ENCODE measurements at regions of chr9 and their contacts with region 1.

Region 1: GRCh38 chr9:83027153-83027891 is 35.6 kb downstream of the RASEF start:
- DNase-seq: peak; percentile 83 to 88
- ATAC-seq: peak; percentile 98
- H3K4me3 ChIP-seq: 0 out of 3 replicates have a peak overlapping the region, but pooled peaks have one; percentile 5
- H3K27ac ChIP-seq: peak overlapping the region; percentile 86
- H3K4me1 ChIP-seq: peaks cover 42% of the 10 kb centered on the region
- CTCF ChIP-seq: no peak
- EP300 ChIP-seq: peak; percentile 72 to 75; a peak in 4 of 5 replicates
- POLR2A ChIP-seq: no peak
- RAD21 ChIP-seq: 0 out of 5 replicates have a peak, but pooled peaks of 1 of the 2 experiments have one; percentile 16

Region 2: GRCh38 chr9:83062656-83063527 is 35.6 kb after region 1 on chr9 and contains the start of gene RASEF:
- CTCF ChIA-PET with region 1: interaction called, 3 read pairs
- POLR2A ChIA-PET with region 1: interaction called, 10 read pairs
- DNase-seq: peak; percentile 62 to 80
- ATAC-seq: peak; percentile 86 to 89
- H3K4me3 ChIP-seq: peak within 1 kb of the TSS; percentile 78
- H3K27ac ChIP-seq: peak within 1 kb of the TSS; percentile 89 to 95
- H3K4me1 ChIP-seq: peaks cover 42% of the 10 kb centered on the region
- CTCF ChIP-seq: peak; percentile 34
- EP300 ChIP-seq: no peak
- POLR2A ChIP-seq: peak; percentile 84
- RAD21 ChIP-seq: peak in 1 of 2 experiments; percentile 52; a peak in 3 of 5 replicates
- polyA plus RNA-seq, gene RASEF: 8.1 and 8.8 TPM in 2 replicates

Region 3: GRCh38 chr9:83081010-83081690 is 53.8 kb after region 1 on chr9:
- CTCF ChIA-PET with region 1: no interaction called
- POLR2A ChIA-PET with region 1: no interaction called
- DNase-seq: peak in 1 of 2 experiments; percentile 14
- ATAC-seq: no peak
- H3K4me3 ChIP-seq: no peak overlapping the region
- H3K27ac ChIP-seq: no peak overlapping the region
- H3K4me1 ChIP-seq: no peaks in the 10 kb centered on the region
- CTCF ChIP-seq: no peak; the same call in 2 of the 3 replicates
- EP300 ChIP-seq: no peak
- POLR2A ChIP-seq: no peak
- RAD21 ChIP-seq: no peak